HEK293T (cell line): ENCODE measurements at regions of chr13 and their contacts with region 1.

Region 1: GRCh38 chr13:79237986-79238385 is 168.1 kb downstream of the RBM26 start:
- DNase-seq: no peak

Region 2: DNA sequence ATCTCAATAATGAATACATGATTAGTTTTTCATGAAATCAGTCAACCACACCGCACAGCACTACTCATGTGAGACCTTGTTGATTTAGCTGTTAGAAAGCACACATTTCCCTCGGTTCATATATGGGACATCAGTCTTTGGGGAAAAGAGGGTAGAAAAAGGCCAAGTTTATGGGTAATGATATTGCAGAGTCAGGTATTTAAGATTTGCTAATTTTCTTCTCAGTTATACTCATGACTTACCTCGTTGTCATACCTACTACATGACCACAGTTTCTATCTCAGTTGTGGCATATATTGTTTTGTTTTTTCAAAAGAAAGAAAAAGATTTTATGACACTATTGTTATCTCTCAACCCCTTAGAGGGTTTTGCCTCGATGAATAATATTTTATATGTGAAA is 800.2 kb before region 1 on chr13:
- CTCF ChIA-PET with region 1: no interaction called
- POLR2A ChIA-PET with region 1: no interaction called
- DNase-seq: no peak

Region 3: DNA sequence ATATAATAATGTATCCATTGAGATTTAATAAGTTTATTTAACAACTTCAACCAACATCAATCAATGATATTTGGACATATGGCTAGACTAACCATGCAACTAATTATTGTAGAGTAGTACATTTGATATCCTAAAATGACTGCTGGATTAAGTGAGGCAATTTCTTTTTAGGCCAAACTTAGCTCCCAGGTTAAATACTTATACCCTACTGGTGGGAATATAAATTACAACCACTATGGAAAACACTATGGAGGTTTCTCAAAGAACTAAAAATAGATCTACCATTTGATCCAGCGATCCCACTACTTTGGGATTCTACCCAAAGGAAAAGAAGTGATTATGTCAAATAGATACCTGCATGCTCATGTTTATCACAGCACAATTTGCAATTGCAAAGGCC is 177.8 kb before region 1 on chr13:
- CTCF ChIA-PET with region 1: no interaction called
- POLR2A ChIA-PET with region 1: no interaction called
- DNase-seq: no peak

Region 4: DNA sequence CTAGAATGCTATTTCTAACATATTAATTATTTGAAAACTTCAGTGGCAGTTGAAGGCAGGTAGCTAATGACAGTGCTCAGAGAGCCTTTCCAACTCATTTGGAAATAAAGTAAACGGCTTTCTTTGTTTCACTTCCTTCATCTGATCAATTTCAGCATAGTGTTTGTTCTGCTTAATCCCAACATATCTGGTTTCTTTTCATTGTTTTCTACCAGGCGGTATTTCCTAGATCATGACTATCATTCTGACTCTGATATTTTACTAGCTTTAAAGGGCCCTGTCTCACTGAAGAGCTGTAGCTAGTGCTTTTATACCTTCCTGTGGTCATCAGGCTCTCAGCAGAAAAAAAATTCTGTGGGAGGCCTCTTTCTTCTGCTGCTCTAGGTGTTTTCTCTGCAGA is 10.6 kb before region 1 on chr13:
- CTCF ChIA-PET with region 1: interaction called, 14 read pairs
- POLR2A ChIA-PET with region 1: no interaction called
- DNase-seq: no peak

Region 5: DNA sequence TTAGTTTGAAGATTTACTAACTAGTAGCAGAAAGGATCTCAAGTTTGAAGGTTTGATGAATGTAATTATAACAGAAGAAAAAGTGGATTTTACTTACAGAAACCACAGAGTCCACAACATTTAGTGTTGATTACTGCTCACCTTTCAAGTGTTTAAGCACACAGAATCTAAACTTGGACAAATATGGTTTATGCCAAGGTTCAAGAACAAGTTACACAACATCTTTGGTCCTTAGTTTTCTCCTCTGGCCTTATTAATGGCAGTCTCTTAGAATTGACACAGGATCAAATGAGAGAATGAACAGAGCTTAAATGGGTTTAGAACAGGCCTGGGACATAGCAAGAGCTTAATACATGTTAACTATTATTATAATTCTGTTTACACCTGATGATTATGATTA is 35.1 kb after region 1 on chr13:
- CTCF ChIA-PET with region 1: no interaction called
- POLR2A ChIA-PET with region 1: no interaction called
- DNase-seq: no peak